Colonic mucosa (tissue), 4 donors: ENCODE measurements at regions of chr22 and their contacts with region 1.

Region 1: DNA sequence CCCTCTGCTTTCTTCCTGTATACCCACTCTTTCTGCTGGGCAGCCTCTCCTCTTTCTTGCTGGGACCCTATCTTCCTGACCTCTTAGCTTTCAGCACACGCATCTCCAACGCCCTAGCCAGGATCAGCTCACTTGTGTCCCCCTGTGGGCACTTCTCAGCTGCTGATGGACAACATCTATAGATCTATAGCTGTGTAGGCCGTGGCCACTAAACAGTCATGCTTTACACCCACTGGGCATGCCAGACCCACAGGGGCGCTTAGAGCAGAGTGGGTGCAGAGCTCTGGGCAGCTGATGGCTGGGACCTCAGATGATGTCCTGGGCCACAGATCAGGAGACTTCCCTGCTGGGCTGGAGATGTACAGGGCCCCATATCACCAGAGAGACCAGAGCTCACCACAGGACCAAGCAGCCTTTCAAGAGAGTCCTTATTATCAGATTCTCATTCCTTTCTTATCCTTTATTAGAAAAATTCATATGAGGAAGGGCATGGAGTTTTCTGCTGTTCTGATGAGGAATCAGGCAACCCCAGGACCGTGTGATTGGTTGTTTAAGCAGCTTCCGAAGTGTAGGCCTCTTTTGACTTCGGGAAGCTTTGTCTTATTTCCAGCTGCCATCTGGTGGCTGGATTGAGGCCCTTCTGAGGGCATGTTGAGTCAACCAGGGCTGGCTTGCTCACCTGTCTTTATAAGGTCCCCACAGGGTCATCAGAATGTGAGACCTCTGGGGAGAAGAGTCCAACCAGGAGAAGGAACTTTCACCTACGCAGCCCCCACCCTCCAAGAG is 60.5 kb downstream of the OSBP2 start:
- DNase-seq: peak; percentile 68
- H3K4me3 ChIP-seq: no peak overlapping the region
- H3K27ac ChIP-seq: no peak overlapping the region
- H3K4me1 ChIP-seq: no peaks in the 10 kb centered on the region
- H3K27me3 ChIP-seq: no peaks in the 10 kb centered on the region
- CTCF ChIP-seq: peak; percentile 55

Region 2: DNA sequence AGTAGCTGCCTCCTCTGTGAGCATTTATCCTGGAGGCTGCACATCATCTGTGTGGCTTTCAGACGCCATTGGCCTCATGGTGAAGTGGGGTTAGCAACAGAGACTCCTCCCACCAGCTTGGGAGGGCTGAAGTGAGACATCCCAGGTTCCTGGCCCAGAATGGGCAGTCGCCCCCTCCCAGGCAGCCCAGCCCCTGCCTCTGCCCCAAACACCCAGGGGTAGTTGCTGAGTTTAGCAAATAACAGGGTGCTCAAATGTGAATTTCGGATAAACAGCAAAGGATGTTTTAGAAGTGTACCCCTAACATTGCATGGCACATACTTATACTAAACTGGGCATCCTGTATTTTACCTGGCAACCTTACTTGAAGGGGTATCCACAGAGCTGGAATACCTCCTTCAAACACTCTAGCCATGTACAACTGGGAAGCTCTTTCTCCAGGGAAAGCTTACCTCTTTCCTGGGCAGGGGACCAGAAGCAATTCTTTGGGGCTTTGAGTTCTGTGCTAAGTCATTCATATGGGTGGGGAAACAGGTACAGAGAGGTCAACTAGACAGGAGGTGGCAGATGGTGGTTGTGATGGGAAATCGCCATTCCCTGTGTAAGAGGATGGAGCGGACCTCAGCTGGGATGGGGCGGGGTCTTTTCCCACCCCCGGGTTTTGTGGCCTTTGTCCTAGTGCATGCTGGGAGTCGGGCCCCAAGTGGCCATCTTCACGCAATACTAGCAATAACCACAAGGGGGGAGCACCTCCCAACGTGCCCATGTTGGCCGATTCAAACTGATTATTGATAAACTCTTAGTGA is 310.3 kb before region 1 on chr22:
- intact Hi-C with region 1: loop called (anchors 10 kb)
- DNase-seq: peak; percentile 49
- H3K4me3 ChIP-seq: no peak overlapping the region
- H3K27ac ChIP-seq: no peak overlapping the region
- H3K4me1 ChIP-seq: no peaks in the 10 kb centered on the region
- H3K27me3 ChIP-seq: no peaks in the 10 kb centered on the region
- CTCF ChIP-seq: peak; percentile 62

Region 3: GRCh38 chr22:30523776-30524489 is 231.2 kb before region 1 on chr22:
- intact Hi-C with region 1: no loop called
- DNase-seq: no peak
- H3K4me3 ChIP-seq: no peak overlapping the region
- H3K27ac ChIP-seq: no peak overlapping the region
- H3K4me1 ChIP-seq: no peaks in the 10 kb centered on the region
- H3K27me3 ChIP-seq: no peaks in the 10 kb centered on the region
- CTCF ChIP-seq: no peak

Region 4: DNA sequence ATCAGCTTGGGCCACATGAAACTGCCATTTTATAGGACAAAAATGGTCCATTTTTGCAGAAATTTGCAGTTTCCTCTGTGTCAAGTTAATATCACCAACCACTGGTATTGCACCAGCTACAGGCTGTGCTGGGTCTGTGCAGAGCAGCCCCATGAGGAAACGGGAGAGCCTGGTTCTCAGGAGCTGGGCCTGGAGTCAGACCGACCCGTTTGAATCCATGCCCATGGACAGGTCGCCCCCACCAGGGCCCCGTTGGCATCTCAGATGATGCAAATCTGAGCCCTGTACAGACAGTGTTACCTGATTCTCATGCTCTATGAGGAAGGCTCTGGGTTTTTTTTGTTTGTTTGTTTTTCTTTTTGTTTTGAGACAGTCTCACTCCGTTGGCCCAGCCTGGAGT is 198.8 kb before region 1 on chr22:
- intact Hi-C with region 1: loop called (anchors 10 kb)
- DNase-seq: no peak
- H3K4me3 ChIP-seq: no peak overlapping the region
- H3K27ac ChIP-seq: no peak overlapping the region
- H3K4me1 ChIP-seq: no peaks in the 10 kb centered on the region
- H3K27me3 ChIP-seq: no peaks in the 10 kb centered on the region
- CTCF ChIP-seq: no peak

Region 5: GRCh38 chr22:30634471-30635233 is 120.5 kb before region 1 on chr22:
- intact Hi-C with region 1: loop called (anchors 2 kb)
- DNase-seq: peak; percentile 93
- H3K4me3 ChIP-seq: peak overlapping the region; percentile 72
- H3K27ac ChIP-seq: peak overlapping the region; percentile 84
- H3K4me1 ChIP-seq: peaks cover 15% of the 10 kb centered on the region
- H3K27me3 ChIP-seq: no peaks in the 10 kb centered on the region
- CTCF ChIP-seq: peak; percentile 90